ENCODE measurements at regions of chr2 and their contacts with region 1.

Region 1: GRCh38 chr2:119753041-119753929 is 6.4 kb upstream of the PTPN4 start:
- DNase-seq: peak in 1 of 2 experiments; percentile 66
- H3K4me3 ChIP-seq: no peak overlapping the region
- H3K4me3 Mint-ChIP-seq: no peak overlapping the region
- H3K27ac Mint-ChIP-seq: no peak overlapping the region
- H3K4me1 ChIP-seq: no peaks in the 10 kb centered on the region
- H3K4me1 Mint-ChIP-seq: peaks cover 1% of the 10 kb centered on the region
- H3K27me3 ChIP-seq: no peaks in the 10 kb centered on the region
- H3K27me3 Mint-ChIP-seq: peaks cover 5% of the 10 kb centered on the region
- CTCF ChIP-seq: peak; percentile 66 to 70

Region 2: DNA sequence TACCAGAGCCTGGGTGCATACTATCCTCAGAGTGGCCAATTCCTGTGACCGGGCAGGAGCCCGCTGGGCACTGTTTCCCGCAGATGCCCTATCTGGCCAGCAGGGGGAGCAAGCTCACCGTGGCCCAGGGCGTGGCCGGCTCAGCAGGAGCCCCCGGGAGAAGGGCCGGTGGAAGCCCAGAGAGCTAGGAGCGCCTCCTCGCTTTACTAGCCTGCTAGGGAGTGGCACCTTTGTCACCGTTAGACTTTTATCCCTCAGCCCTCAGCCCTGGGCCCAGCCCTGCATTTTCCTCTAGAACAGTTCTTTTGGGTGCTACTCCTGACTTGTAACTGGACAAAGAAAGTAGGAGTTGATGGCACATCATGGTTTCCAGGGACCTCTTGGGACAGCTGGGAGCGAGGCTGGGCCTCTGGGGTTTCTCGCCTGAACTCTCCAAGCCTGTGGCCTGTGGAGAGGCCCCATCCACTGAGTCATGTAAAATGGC is 50.3 kb before region 1 on chr2:
- CTCF ChIA-PET with region 1: no interaction called
- POLR2A ChIA-PET with region 1: no interaction called
- intact Hi-C with region 1: loop called (anchors 2 kb)
- DNase-seq: peak; percentile 74 to 85
- H3K4me3 ChIP-seq: no peak overlapping the region
- H3K4me3 Mint-ChIP-seq: no peak overlapping the region
- H3K27ac Mint-ChIP-seq: no peak overlapping the region
- H3K4me1 ChIP-seq: no peaks in the 10 kb centered on the region
- H3K4me1 Mint-ChIP-seq: peaks cover 12% of the 10 kb centered on the region
- H3K27me3 ChIP-seq: no peaks in the 10 kb centered on the region
- H3K27me3 Mint-ChIP-seq: no peaks in the 10 kb centered on the region
- CTCF ChIP-seq: peak; percentile 97

Region 3: GRCh38 chr2:119826370-119826961 is 73.2 kb after region 1 on chr2:
- CTCF ChIA-PET with region 1: interaction called, 14 read pairs
- POLR2A ChIA-PET with region 1: no interaction called
- intact Hi-C with region 1: loop called (anchors 1 kb)
- DNase-seq: peak; percentile 48 to 65
- H3K4me3 ChIP-seq: no peak overlapping the region
- H3K4me3 Mint-ChIP-seq: no peak overlapping the region
- H3K27ac Mint-ChIP-seq: no peak overlapping the region
- H3K4me1 ChIP-seq: 0 out of 2 replicates have a peak, but pooled peaks cover 4% of the 10 kb centered on the region
- H3K4me1 Mint-ChIP-seq: peaks cover 7% of the 10 kb centered on the region
- H3K27me3 ChIP-seq: no peaks in the 10 kb centered on the region
- H3K27me3 Mint-ChIP-seq: no peaks in the 10 kb centered on the region
- CTCF ChIP-seq: peak; percentile 71 to 90

Measured in Caco-2 (cell line).